ENCODE measurements at regions of chr3 and their contacts with region 1.

Region 1: DNA sequence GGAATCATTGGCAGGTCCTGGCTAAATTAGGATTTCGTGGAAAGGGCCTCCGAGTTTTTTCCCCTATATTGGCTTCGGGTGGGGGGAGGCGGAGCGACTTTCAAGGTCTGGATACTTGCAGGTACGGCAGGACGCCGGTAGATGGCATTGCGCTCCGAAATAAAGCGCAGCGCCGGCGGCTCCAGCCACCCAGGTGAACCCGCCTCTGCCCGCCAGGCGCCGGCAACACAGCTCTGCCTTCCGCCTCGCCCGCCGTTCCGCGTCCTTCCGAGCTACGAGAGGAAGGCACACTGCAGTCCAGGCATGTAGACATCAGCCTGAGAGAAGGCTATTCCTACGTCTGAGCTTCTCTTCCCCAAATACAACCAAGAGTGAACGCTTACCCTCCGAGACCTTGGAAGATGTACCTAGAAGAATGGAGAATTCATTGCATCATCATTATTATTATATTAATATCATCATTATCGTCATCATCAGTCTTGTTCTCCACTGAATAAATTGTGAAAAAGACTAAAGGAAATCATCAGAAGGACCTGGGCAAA is 514.1 kb downstream of the MECOM start:
- DNase-seq: peak; percentile 76
- H3K4me3 ChIP-seq: peak overlapping the region; percentile 32
- CTCF ChIP-seq: peak; percentile 80

Region 2: GRCh38 chr3:169060042-169060441 is 89.4 kb before region 1 on chr3:
- in situ Hi-C with region 1: loop called (anchors 5 kb)
- DNase-seq: no peak
- H3K4me3 ChIP-seq: no peak overlapping the region
- CTCF ChIP-seq: no peak

Region 3: DNA sequence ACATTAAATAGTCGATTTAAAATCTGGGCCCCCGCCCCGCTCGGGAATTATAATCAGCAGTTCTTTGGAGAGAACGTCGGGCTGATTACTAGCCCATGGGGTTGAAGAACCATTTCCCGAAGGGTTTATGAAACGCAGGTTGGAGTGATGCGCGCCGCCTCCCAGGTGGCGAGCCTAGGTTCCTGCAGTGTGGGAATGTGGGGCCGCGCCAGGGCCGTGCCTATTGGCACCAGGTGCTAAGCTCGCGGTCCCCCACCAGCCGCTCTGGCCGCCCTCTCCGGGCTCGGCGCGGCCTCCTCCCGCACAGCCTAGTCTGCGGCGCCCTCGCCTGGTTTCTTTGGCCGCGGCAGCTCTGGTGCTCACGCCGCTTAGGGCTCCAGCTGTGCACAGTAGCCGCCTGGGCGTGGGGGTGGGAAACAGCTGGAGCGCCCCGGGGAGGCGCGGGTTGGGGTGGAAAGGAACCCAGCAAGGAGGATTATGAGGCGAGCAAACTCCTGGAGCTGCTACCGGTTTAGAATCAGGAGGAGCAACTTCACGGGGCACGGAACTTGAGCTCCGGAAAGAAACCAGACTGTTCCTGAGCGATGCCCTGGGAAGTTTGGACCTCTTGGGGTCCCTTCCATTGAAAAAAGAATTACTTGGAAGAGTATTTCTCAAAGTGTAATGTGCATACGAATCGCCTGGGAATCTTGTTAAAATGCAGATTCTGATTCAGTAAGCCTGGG is 519.7 kb after region 1 on chr3:
- in situ Hi-C with region 1: loop called (anchors 10 kb)
- DNase-seq: no peak
- H3K4me3 ChIP-seq: peak overlapping the region; percentile 44
- CTCF ChIP-seq: peak; percentile 85

Measured in astrocyte of the cerebellum (primary cell).